ENCODE measurements at regions of chr19 and their contacts with region 1.

Region 1: DNA sequence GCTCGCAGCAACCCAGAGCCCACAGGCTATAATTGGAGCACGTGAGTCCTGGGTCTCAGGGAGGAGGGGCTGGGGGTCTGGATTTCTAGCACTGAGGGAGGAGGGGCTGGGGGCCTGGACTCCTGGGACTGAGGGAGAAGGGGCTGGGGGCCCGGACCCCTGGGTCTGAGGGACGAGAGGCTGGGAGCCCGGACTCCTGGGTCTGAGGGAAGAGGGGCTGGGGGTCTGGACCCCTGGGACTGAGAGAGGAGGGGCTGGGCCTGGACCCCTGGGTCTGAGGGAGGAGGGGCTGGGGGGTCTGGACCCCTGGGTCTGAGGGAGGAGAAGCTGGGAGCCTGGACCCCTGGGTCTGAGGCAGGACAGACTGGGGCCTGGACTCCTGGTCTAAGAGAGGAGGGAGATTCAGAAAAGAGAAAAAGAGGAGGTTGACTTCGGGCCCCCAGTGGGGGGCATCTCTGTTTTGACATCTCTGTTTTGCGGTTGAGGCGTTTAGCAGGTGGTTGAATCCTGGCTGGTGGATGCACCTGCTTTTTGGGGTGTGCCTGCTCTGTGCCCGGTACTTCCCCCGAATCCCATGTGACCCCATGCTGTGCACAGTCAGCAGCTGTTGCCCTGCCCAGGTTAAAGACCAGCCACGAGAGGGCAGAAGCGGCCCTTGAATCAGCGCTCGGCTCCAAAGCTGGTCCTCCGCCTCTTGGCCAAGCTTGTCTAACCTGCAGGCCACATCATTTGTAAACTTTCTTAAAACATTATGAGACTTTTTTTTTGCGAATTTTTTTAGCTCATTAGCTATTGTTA is 10.5 kb downstream of the PVR start:
- DNase-seq: peak; percentile 55 to 72 (median 58)
- ATAC-seq: peak; percentile 82
- H3K4me3 ChIP-seq: no peak overlapping the region
- H3K27ac ChIP-seq: no peak overlapping the region
- H3K4me1 ChIP-seq: peaks cover 0 to 13% of the 10 kb centered on the region in 2 experiments; a peak in 2 of 5 replicates
- H3K27me3 ChIP-seq: no peaks in the 10 kb centered on the region
- CTCF ChIP-seq: peak; percentile 78 to 83 (median 79)
- EP300 ChIP-seq: no peak
- POLR2A ChIP-seq: no peak
- RAD21 ChIP-seq: peak; percentile 69 to 70

Region 2: DNA sequence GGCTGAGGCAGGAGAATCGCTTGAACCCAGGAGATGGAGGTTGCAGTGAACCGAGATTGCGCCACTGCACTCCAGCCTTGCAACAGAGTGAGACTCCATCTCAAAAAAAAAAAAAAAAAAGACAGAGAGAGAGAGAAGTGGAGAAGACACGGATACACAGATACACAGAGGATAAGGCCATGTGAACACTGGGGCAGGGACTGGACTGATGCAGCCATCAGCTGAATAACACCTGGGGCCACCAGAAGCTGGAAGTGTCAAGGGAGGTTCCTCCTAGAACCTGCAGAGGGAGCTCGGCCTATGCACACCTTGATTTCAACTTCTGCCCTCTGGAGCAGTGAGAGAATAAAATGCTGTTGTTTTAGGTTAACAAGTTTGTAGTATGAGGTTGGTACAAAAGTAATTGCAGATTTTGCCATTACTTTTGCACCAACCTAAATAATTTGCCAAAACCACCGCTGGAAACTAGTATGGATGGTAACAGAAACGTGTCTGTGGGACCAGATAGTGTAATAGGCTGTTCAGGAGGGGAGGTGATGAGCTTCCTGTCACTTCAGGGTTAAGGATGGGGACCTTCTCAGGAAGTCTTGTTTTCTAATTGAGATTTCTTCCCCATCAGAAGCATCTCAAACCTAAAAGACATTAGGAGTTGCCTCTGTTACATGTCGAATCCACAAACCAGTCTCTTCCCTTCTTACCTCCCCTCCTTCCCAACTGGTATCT is 77.2 kb before region 1 on chr19:
- CTCF ChIA-PET with region 1: interaction called, 14 read pairs
- POLR2A ChIA-PET with region 1: interaction called, 3 read pairs
- in situ Hi-C with region 1: loop called (anchors 5 kb)
- intact Hi-C with region 1: loop called (anchors 1 kb)
- DNase-seq: peak; percentile 41 to 66 (median 48)
- ATAC-seq: peak; percentile 94
- H3K4me3 ChIP-seq: no peak overlapping the region
- H3K27ac ChIP-seq: no peak overlapping the region
- H3K4me1 ChIP-seq: peaks cover 3 to 30% of the 10 kb centered on the region in 2 experiments
- H3K27me3 ChIP-seq: no peaks in the 10 kb centered on the region
- CTCF ChIP-seq: peak; percentile 76 to 89 (median 79)
- EP300 ChIP-seq: no peak
- POLR2A ChIP-seq: no peak
- RAD21 ChIP-seq: peak; percentile 64 to 89

Region 3: GRCh38 chr19:44587963-44588770 is 66.0 kb before region 1 on chr19:
- CTCF ChIA-PET with region 1: interaction called, 4 read pairs
- POLR2A ChIA-PET with region 1: interaction called, 3 read pairs
- in situ Hi-C with region 1: no loop called
- intact Hi-C with region 1: loop called (anchors 2 kb)
- DNase-seq: peak in 1 of 4 experiments; percentile 42
- ATAC-seq: peak; percentile 82
- H3K4me3 ChIP-seq: no peak overlapping the region
- H3K27ac ChIP-seq: peak overlapping the region; percentile 91
- H3K4me1 ChIP-seq: peaks cover 34 to 42% of the 10 kb centered on the region in 2 experiments
- H3K27me3 ChIP-seq: no peaks in the 10 kb centered on the region
- CTCF ChIP-seq: peak in 2 of 3 experiments; percentile 20 to 47; a peak in 2 of 6 replicates
- EP300 ChIP-seq: peak; percentile 73
- POLR2A ChIP-seq: no peak
- RAD21 ChIP-seq: peak; percentile 63 to 75

Region 4: GRCh38 chr19:44666852-44667556 is 12.8 kb after region 1 on chr19:
- CTCF ChIA-PET with region 1: no interaction called
- POLR2A ChIA-PET with region 1: no interaction called
- in situ Hi-C with region 1: no loop called
- intact Hi-C with region 1: no loop called
- DNase-seq: peak in 1 of 4 experiments; percentile 27
- ATAC-seq: peak; percentile 21; the same call in 1 of the 3 replicates
- H3K4me3 ChIP-seq: no peak overlapping the region
- H3K27ac ChIP-seq: no peak overlapping the region
- H3K4me1 ChIP-seq: peaks cover 0 to 5% of the 10 kb centered on the region in 2 experiments; a peak in 4 of 5 replicates
- H3K27me3 ChIP-seq: no peaks in the 10 kb centered on the region
- CTCF ChIP-seq: no peak
- EP300 ChIP-seq: no peak
- POLR2A ChIP-seq: no peak
- RAD21 ChIP-seq: no peak